ENCODE measurements at regions of chrX and their contacts with region 1.

Region 1: GRCh38 chrX:103404231-103405208 is 28.2 kb downstream of the BEX3 start:
- DNase-seq: peak; percentile 65 to 75
- H3K4me3 ChIP-seq: peak overlapping the region; percentile 69
- H3K27ac ChIP-seq: no peak overlapping the region
- H3K4me1 ChIP-seq: peaks cover 6% of the 10 kb centered on the region; the same call in 1 of the 2 replicates
- H3K27me3 ChIP-seq: no peaks in the 10 kb centered on the region
- CTCF ChIP-seq: no peak

Region 2: GRCh38 chrX:103356130-103356798 is 48.3 kb before region 1 on chrX and contains the start of gene TCEAL9:
- CTCF ChIA-PET with region 1: no interaction called
- POLR2A ChIA-PET with region 1: interaction called, 10 read pairs
- intact Hi-C with region 1: no loop called
- DNase-seq: peak in 1 of 2 experiments; percentile 40
- H3K4me3 ChIP-seq: peak within 1 kb of the TSS; percentile 72
- H3K27ac ChIP-seq: 0 out of 2 replicates have a peak within 1 kb of the TSS, but pooled peaks have one; percentile 9
- H3K4me1 ChIP-seq: peaks cover 14% of the 10 kb centered on the region; the same call in 1 of the 2 replicates
- H3K27me3 ChIP-seq: no peaks in the 10 kb centered on the region
- CTCF ChIP-seq: no peak
- total RNA-seq, gene TCEAL9: 44.4 and 57.1 TPM in 2 replicates

Region 3: DNA sequence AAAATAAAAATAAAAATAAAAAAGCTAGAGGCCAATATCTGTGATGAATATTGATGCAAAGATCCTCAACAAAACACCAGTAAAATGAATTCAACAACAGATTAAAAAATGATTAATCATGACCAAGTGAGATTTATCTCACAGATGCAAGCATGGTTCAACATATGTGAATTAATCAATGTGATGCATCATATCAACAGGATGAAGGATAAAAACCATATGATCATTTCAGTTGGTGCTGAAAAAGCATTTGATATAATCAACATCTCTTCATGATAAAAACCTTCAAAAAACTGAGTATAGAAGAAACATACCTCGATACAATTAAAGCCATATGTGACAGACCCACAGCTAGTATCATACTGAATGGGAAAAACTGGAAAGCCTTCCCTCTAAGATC is 243.1 kb after region 1 on chrX:
- CTCF ChIA-PET with region 1: no interaction called
- POLR2A ChIA-PET with region 1: no interaction called
- intact Hi-C with region 1: no loop called
- DNase-seq: no peak
- H3K4me3 ChIP-seq: no peak overlapping the region
- H3K27ac ChIP-seq: no peak overlapping the region
- H3K4me1 ChIP-seq: no peaks in the 10 kb centered on the region
- H3K27me3 ChIP-seq: no peaks in the 10 kb centered on the region
- CTCF ChIP-seq: no peak

Measured in PC-9 (cell line).